ENCODE measurements at regions of chr1 and their contacts with region 1.

Region 1: GRCh38 chr1:33624991-33625870 is 152.8 kb downstream of the ZSCAN20 start:
- DNase-seq: no peak
- ATAC-seq: no peak
- H3K4me3 ChIP-seq: no peak overlapping the region
- H3K27ac ChIP-seq: no peak overlapping the region
- H3K4me1 ChIP-seq: no peaks in the 10 kb centered on the region
- H3K27me3 ChIP-seq: no peaks in the 10 kb centered on the region; the same call in none of the 2 replicates
- CTCF ChIP-seq: peak; percentile 18; the same call in 1 of the 2 replicates
- POLR2A ChIP-seq: no peak
- RAD21 ChIP-seq: no peak

Region 2: DNA sequence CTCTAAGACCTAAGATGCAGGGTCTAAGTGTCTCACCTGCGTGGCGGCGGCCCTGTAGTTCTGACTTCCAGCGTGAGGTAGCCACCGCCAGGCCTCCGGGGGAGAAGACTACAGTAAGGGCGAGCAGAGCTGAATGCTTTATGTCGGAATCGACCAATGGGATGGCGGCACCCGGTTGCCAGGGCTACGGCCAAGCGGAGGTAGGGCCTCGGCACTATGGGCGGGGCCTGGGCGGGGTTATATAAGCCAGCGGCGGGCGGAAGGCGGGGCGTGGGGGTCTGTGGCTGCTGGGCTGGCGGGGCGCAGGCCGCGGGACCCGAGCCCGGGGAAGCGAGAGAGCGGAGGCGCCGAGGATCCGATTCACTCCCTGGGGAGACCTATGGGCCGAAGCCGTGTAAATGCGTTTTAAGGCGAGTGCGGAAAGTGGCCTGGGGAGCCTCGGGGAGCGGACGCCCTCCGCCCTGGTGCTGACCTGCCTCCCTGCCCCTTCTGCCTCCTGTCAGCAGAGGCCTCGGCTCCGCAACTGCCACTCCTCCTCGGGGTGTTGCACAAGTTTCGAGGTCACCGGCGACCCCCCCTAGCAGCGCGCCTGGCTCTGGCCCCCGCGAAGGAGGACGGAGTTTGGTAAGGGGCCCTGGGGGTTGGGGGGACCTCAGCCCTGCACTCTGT is 544.2 kb before region 1 on chr1 and contains the start of gene AZIN2:
- CTCF ChIA-PET with region 1: no interaction called
- POLR2A ChIA-PET with region 1: no interaction called
- dilution Hi-C with region 1: no loop called
- in situ Hi-C with region 1: loop called (anchors 25 kb)
- intact Hi-C with region 1: no loop called
- DNase-seq: peak; percentile 92
- ATAC-seq: peak; percentile 97
- H3K4me3 ChIP-seq: peak within 1 kb of the TSS; percentile 89
- H3K27ac ChIP-seq: peak within 1 kb of the TSS; percentile 78
- H3K4me1 ChIP-seq: no peaks in the 10 kb centered on the region; the same call in none of the 2 replicates
- H3K27me3 ChIP-seq: no peaks in the 10 kb centered on the region
- CTCF ChIP-seq: no peak
- POLR2A ChIP-seq: peak; percentile 83
- RAD21 ChIP-seq: no peak
- total RNA-seq, gene AZIN2: 2.2 and 4.7 TPM in 2 replicates

Region 3: GRCh38 chr1:33219881-33220661 is 405.2 kb before region 1 on chr1:
- CTCF ChIA-PET with region 1: no interaction called
- POLR2A ChIA-PET with region 1: no interaction called
- dilution Hi-C with region 1: no loop called
- in situ Hi-C with region 1: loop called (anchors 25 kb)
- intact Hi-C with region 1: no loop called
- DNase-seq: peak; percentile 45
- ATAC-seq: peak; percentile 56; the same call in 1 of the 2 replicates
- H3K4me3 ChIP-seq: no peak overlapping the region
- H3K27ac ChIP-seq: no peak overlapping the region
- H3K4me1 ChIP-seq: peaks cover 10% of the 10 kb centered on the region
- H3K27me3 ChIP-seq: peaks cover 4% of the 10 kb centered on the region; the same call in 1 of the 2 replicates
- CTCF ChIP-seq: no peak
- POLR2A ChIP-seq: no peak
- RAD21 ChIP-seq: no peak

Measured in IMR-90 (cell line).